ENCODE measurements at regions of chr1 and their contacts with region 1.

Region 1: GRCh38 chr1:75415187-75415586 is 195.7 kb downstream of the SLC44A5 start:
- DNase-seq: no peak
- H3K4me3 ChIP-seq: no peak overlapping the region
- H3K4me3 Mint-ChIP-seq: no peak overlapping the region
- H3K27ac ChIP-seq: no peak overlapping the region
- H3K27ac Mint-ChIP-seq: no peak overlapping the region
- H3K4me1 ChIP-seq: no peaks in the 10 kb centered on the region
- H3K4me1 Mint-ChIP-seq: no peaks in the 10 kb centered on the region
- H3K27me3 ChIP-seq: no peaks in the 10 kb centered on the region
- H3K27me3 Mint-ChIP-seq: peaks cover 0 to 1% of the 10 kb centered on the region in 2 donors

Region 2: DNA sequence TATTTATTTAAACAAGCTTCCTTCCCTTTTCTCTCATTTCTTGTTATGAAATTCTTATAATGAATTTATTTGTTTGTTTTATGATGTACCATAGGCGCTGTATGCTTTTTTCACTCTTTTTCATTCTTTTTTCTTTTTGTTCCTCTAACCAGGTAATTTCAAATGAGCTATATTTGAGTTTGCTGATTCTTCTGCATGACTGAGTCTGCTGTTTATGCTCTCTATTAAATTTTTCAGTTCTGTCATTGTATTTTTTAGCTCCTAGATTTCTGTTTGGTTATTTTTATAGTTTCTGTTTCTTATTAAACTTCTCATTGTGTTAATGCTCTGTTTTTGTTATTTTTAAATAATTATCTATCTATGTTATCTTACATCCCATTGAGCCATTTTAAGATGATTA is 48.6 kb before region 1 on chr1:
- CTCF ChIA-PET with region 1: no interaction called
- POLR2A ChIA-PET with region 1: no interaction called
- intact Hi-C with region 1: no loop called
- DNase-seq: no peak
- H3K4me3 ChIP-seq: no peak overlapping the region
- H3K4me3 Mint-ChIP-seq: no peak overlapping the region
- H3K27ac ChIP-seq: no peak overlapping the region
- H3K27ac Mint-ChIP-seq: no peak overlapping the region
- H3K4me1 ChIP-seq: no peaks in the 10 kb centered on the region
- H3K4me1 Mint-ChIP-seq: no peaks in the 10 kb centered on the region
- H3K27me3 ChIP-seq: no peaks in the 10 kb centered on the region
- H3K27me3 Mint-ChIP-seq: no peaks in the 10 kb centered on the region

Region 3: DNA sequence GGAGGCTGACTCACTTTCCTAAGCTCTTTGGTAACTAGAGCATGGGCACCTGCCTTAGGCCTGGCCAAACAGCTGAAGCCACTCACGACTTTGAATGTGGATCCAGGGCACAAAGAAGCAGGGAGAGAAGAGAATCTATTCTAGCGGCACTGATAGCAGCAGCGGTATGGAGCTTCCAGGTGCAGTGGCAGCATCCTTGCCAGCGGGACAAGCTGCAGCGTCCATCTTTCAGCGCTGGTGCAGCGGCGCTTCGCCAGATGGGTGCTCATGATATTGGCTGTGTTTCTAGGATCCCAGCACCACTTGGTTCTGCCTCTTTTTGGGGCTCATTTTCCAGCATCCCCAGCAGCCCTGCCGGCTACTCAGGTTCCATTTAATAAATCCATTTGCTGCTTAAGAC is 11.5 kb after region 1 on chr1:
- CTCF ChIA-PET with region 1: no interaction called
- POLR2A ChIA-PET with region 1: no interaction called
- intact Hi-C with region 1: no loop called
- DNase-seq: no peak
- H3K4me3 ChIP-seq: no peak overlapping the region
- H3K4me3 Mint-ChIP-seq: no peak overlapping the region
- H3K27ac ChIP-seq: no peak overlapping the region
- H3K27ac Mint-ChIP-seq: no peak overlapping the region
- H3K4me1 ChIP-seq: no peaks in the 10 kb centered on the region
- H3K4me1 Mint-ChIP-seq: no peaks in the 10 kb centered on the region
- H3K27me3 ChIP-seq: no peaks in the 10 kb centered on the region
- H3K27me3 Mint-ChIP-seq: no peaks in the 10 kb centered on the region

Region 4: DNA sequence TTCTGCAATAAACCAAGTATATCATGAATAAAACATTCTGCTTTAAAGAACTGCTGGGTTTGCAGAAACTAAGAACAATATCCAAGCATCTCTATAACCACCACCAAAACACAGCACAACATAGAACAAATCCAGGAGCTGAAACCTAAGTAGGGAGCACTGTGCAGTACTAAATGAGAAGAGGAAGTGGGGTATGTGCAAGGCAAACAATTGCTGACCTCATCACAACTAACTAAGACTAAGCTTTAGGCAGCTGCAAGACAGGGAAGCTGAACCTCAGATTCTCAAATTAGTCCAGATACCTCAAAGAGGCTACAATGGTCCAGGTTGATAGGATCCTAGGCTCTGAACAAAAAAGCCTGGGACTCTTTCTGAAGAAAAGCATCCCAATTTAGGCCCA is 23.2 kb after region 1 on chr1:
- CTCF ChIA-PET with region 1: no interaction called
- POLR2A ChIA-PET with region 1: no interaction called
- intact Hi-C with region 1: loop called (anchors 1 kb)
- DNase-seq: no peak
- H3K4me3 ChIP-seq: no peak overlapping the region
- H3K4me3 Mint-ChIP-seq: no peak overlapping the region
- H3K27ac ChIP-seq: no peak overlapping the region
- H3K27ac Mint-ChIP-seq: no peak overlapping the region
- H3K4me1 ChIP-seq: no peaks in the 10 kb centered on the region
- H3K4me1 Mint-ChIP-seq: no peaks in the 10 kb centered on the region
- H3K27me3 ChIP-seq: no peaks in the 10 kb centered on the region
- H3K27me3 Mint-ChIP-seq: no peaks in the 10 kb centered on the region

Region 5: DNA sequence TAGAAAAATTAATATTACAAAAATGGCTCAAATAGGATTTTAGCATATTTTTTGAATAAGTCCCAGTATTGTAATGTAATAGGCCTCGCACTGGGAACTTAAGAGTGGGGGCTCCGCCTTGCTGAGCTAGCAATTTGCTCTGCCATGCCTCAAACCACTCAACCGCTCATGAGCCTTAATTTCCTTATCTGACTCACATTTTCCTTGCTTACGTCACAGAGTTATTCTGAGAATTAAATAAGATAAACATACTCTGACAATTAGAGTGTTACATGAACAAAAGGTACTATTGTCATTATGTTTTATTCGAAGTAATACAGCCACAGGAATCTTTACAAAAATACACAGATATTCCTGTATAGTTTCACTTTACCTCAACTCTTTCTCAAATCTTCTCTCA is 87.6 kb after region 1 on chr1:
- CTCF ChIA-PET with region 1: no interaction called
- POLR2A ChIA-PET with region 1: no interaction called
- intact Hi-C with region 1: no loop called
- DNase-seq: no peak
- H3K4me3 ChIP-seq: no peak overlapping the region
- H3K4me3 Mint-ChIP-seq: no peak overlapping the region
- H3K27ac ChIP-seq: no peak overlapping the region
- H3K27ac Mint-ChIP-seq: no peak overlapping the region
- H3K4me1 ChIP-seq: no peaks in the 10 kb centered on the region
- H3K4me1 Mint-ChIP-seq: no peaks in the 10 kb centered on the region
- H3K27me3 ChIP-seq: no peaks in the 10 kb centered on the region
- H3K27me3 Mint-ChIP-seq: peaks cover 0 to 2% of the 10 kb centered on the region in 2 donors

Measured in CD4-positive, alpha-beta memory T cell (primary cell).